ENCODE measurements at regions of chr12 and their contacts with region 1.

Region 1: GRCh38 chr12:88580051-88580871 is at the start of gene KITLG:
- DNase-seq: peak; percentile 87
- ATAC-seq: peak; percentile 91
- H3K4me3 ChIP-seq: peak within 1 kb of the TSS; percentile 52
- H3K27ac ChIP-seq: peak within 1 kb of the TSS; percentile 75
- H3K4me1 ChIP-seq: no peaks in the 10 kb centered on the region
- H3K27me3 ChIP-seq: no peaks in the 10 kb centered on the region
- CTCF ChIP-seq: peak; percentile 52
- POLR2A ChIP-seq: peak; percentile 98
- RAD21 ChIP-seq: peak; percentile 57
- total RNA-seq, gene KITLG: 87.5 and 117 TPM in 2 replicates

Region 2: GRCh38 chr12:88325076-88325815 is 255.0 kb before region 1 on chr12:
- CTCF ChIA-PET with region 1: no interaction called
- POLR2A ChIA-PET with region 1: no interaction called
- dilution Hi-C with region 1: no loop called
- in situ Hi-C with region 1: no loop called
- intact Hi-C with region 1: loop called (anchors 2 kb)
- DNase-seq: peak; percentile 98
- ATAC-seq: peak; percentile 89
- H3K4me3 ChIP-seq: peak overlapping the region; percentile 3; the same call in 1 of the 2 replicates
- H3K27ac ChIP-seq: peak overlapping the region; percentile 99
- H3K4me1 ChIP-seq: peaks cover 4% of the 10 kb centered on the region
- H3K27me3 ChIP-seq: no peaks in the 10 kb centered on the region
- CTCF ChIP-seq: 0 out of 2 replicates have a peak, but pooled peaks have one; percentile 15
- POLR2A ChIP-seq: no peak
- RAD21 ChIP-seq: peak; percentile 18; the same call in 1 of the 2 replicates

Region 3: GRCh38 chr12:88538250-88538649 is 42.0 kb before region 1 on chr12:
- CTCF ChIA-PET with region 1: no interaction called
- POLR2A ChIA-PET with region 1: no interaction called
- dilution Hi-C with region 1: no loop called
- in situ Hi-C with region 1: no loop called
- intact Hi-C with region 1: no loop called
- DNase-seq: peak; percentile 17
- ATAC-seq: no peak
- H3K4me3 ChIP-seq: no peak overlapping the region
- H3K27ac ChIP-seq: no peak overlapping the region
- H3K4me1 ChIP-seq: no peaks in the 10 kb centered on the region
- H3K27me3 ChIP-seq: no peaks in the 10 kb centered on the region
- CTCF ChIP-seq: no peak
- POLR2A ChIP-seq: no peak
- RAD21 ChIP-seq: no peak

Region 4: GRCh38 chr12:88726804-88727720 is 146.8 kb after region 1 on chr12:
- CTCF ChIA-PET with region 1: no interaction called
- POLR2A ChIA-PET with region 1: no interaction called
- dilution Hi-C with region 1: no loop called
- in situ Hi-C with region 1: no loop called
- intact Hi-C with region 1: loop called (anchors 5 kb)
- DNase-seq: peak; percentile 83
- ATAC-seq: peak; percentile 86
- H3K4me3 ChIP-seq: peak overlapping the region; percentile 25; the same call in 1 of the 2 replicates
- H3K27ac ChIP-seq: peak overlapping the region; percentile 60
- H3K4me1 ChIP-seq: peaks cover 8% of the 10 kb centered on the region
- H3K27me3 ChIP-seq: no peaks in the 10 kb centered on the region
- CTCF ChIP-seq: no peak
- POLR2A ChIP-seq: no peak
- RAD21 ChIP-seq: no peak

Region 5: GRCh38 chr12:88993651-88994050 is 413.4 kb after region 1 on chr12:
- CTCF ChIA-PET with region 1: interaction called, 3 read pairs
- POLR2A ChIA-PET with region 1: interaction called, 3 read pairs
- dilution Hi-C with region 1: loop called (anchors 25 kb)
- in situ Hi-C with region 1: loop called (anchors 25 kb)
- intact Hi-C with region 1: loop called (anchors 1 kb)
- DNase-seq: peak; percentile 83
- ATAC-seq: peak; percentile 82
- H3K4me3 ChIP-seq: no peak overlapping the region
- H3K27ac ChIP-seq: no peak overlapping the region
- H3K4me1 ChIP-seq: no peaks in the 10 kb centered on the region; the same call in 1 of the 2 replicates
- H3K27me3 ChIP-seq: no peaks in the 10 kb centered on the region
- CTCF ChIP-seq: peak; percentile 73
- POLR2A ChIP-seq: no peak
- RAD21 ChIP-seq: peak; percentile 86

Region 6: DNA sequence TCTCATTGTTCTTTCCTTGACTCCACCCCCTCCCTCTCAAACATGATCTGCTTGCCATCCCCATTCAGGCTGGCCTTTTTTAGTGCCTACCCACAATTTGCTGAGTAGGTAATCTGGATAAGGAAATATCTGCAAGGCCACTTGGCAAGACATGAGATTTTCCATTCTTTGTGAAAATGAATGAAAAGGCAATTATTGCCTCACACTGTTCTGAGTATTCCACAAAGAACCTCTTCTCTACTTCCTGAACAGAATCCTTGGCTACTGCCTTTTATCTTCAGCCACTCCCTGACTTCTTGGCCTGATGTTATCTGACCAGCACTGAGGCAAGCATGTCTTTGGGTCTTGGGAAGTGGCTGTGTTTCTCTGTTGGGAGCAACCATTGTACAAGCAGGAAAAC is 1391.6 kb after region 1 on chr12:
- CTCF ChIA-PET with region 1: no interaction called
- POLR2A ChIA-PET with region 1: no interaction called
- dilution Hi-C with region 1: no loop called
- in situ Hi-C with region 1: no loop called
- intact Hi-C with region 1: no loop called
- DNase-seq: no peak
- ATAC-seq: no peak
- H3K4me3 ChIP-seq: no peak overlapping the region
- H3K27ac ChIP-seq: no peak overlapping the region
- H3K4me1 ChIP-seq: no peaks in the 10 kb centered on the region
- H3K27me3 ChIP-seq: no peaks in the 10 kb centered on the region
- CTCF ChIP-seq: no peak
- POLR2A ChIP-seq: no peak
- RAD21 ChIP-seq: no peak

Measured in IMR-90 (cell line).